ENCODE measurements at regions of chr6 and their contacts with region 1.

Region 1: GRCh38 chr6:28981833-28982475 is 23.2 kb downstream of the ZNF311 start:
- DNase-seq: peak in 1 of 2 donors; percentile 93
- H3K4me3 ChIP-seq: peak overlapping the region; percentile 56 to 64
- H3K27ac ChIP-seq: peak overlapping the region; percentile 86
- H3K4me1 ChIP-seq: peaks cover 14% of the 10 kb centered on the region
- H3K27me3 ChIP-seq: no peaks in the 10 kb centered on the region
- CTCF ChIP-seq: no peak
- POLR2A ChIP-seq: no peak

Region 2: DNA sequence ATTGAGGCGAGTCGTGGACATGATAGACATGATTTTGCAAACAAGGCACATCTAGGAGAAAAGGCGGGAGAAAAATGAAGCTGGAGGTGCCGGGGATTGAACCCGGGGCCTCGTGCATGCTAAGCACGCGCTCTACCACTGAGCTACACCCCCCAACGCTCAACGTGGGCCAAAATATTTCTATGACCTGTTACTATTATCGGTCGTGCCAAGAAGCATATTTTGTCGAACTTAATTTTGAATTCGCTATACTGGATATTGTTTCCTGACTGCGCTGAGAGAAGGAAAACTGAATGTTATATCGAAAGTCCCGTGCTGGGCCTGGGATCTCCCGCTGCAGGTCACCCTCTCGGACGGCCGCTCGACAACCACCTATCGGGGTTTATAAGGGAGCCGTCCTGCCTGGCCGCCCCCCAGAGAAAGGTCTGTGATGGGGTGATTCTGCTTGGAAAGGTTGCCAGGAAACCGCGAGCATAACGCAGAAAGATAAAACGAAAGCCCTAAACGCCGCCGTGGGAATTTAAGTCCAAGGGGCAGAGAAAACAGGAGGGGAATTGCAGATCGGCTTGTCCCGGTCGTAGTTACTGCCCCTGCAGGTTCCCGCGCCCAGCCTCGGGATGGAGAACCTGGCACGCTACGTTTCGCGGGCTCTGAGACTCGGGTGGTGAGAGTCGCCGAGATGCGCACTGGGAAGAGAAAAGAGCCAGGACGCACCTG is 118.2 kb before region 1 on chr6:
- intact Hi-C with region 1: loop called (anchors 10 kb)
- DNase-seq: no peak
- H3K4me3 ChIP-seq: peak overlapping the region; percentile 47 to 89
- H3K27ac ChIP-seq: peak overlapping the region; percentile 80
- H3K4me1 ChIP-seq: peaks cover 23% of the 10 kb centered on the region
- H3K27me3 ChIP-seq: no peaks in the 10 kb centered on the region
- CTCF ChIP-seq: peak in 1 of 3 experiments; percentile 34
- POLR2A ChIP-seq: no peak

Region 3: DNA sequence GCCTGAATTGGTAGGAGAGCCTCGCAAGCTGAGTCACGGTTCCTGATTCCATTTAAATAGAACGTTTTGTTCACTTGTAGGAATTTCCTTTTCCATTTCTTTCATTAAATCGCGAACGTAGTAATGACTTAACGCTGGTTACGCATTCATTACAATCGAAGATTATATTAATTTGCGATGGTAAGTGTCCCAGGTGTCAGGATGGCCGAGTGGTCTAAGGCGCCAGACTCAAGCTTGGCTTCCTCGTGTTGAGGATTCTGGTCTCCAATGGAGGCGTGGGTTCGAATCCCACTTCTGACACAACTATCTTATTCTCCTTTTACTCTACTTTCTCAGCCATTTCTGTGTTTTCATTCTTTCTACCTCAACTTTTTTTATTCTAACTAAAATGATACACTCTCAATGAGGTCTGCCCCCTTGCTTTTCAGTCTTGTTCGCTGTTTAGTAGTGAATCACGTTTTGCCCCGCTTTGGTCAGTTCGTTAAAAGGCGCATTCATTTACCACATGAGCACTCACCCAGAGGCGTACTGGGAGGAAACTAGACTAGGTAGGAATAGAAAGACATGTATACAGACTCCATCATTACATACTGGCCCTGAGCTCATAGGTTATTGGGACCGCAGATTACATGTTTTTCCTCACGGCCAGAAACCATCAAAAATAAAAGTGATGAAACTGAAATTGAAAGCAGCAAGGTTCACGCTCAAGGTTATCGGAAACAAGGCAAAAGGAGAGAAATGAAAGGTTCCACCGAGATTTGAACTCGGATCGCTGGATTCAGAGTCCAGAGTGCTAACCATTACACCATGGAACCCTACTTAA is 40.9 kb before region 1 on chr6:
- intact Hi-C with region 1: loop called (anchors 5 kb)
- DNase-seq: peak in 1 of 2 donors; percentile 89
- H3K4me3 ChIP-seq: peak overlapping the region; percentile 53 to 62
- H3K27ac ChIP-seq: peak overlapping the region; percentile 88
- H3K4me1 ChIP-seq: peaks cover 19% of the 10 kb centered on the region
- H3K27me3 ChIP-seq: no peaks in the 10 kb centered on the region
- CTCF ChIP-seq: no peak
- POLR2A ChIP-seq: no peak

Region 4: DNA sequence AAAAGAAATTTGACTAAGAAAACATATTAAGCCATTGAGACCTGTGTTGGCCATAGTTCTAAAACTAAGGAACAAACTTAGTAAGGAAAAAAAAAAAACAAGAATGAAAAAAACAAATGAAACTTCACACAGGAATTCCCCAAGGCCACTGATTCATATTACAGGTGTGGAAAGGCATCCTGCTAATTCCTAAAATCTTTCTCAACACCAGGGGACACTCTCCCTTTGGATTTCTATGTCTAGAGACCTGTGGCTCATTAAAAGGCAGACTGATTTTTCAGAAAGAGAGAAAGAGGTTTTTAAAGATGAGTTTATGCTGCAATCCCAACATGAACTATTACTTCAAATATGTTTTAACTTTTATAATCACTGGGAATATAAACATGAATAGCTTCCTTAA is 432.6 kb after region 1 on chr6 and contains the start of gene OR12D1:
- intact Hi-C with region 1: no loop called
- DNase-seq: no peak
- H3K4me3 ChIP-seq: no peak within 1 kb of the TSS
- H3K27ac ChIP-seq: no peak within 1 kb of the TSS
- H3K4me1 ChIP-seq: no peaks in the 10 kb centered on the region
- H3K27me3 ChIP-seq: no peaks in the 10 kb centered on the region
- CTCF ChIP-seq: no peak
- POLR2A ChIP-seq: no peak
- total RNA-seq, gene OR12D1: not detected

Measured in vagina (tissue), 2 donors.